ENCODE measurements at regions of chr10 and their contacts with region 1.

Region 1: DNA sequence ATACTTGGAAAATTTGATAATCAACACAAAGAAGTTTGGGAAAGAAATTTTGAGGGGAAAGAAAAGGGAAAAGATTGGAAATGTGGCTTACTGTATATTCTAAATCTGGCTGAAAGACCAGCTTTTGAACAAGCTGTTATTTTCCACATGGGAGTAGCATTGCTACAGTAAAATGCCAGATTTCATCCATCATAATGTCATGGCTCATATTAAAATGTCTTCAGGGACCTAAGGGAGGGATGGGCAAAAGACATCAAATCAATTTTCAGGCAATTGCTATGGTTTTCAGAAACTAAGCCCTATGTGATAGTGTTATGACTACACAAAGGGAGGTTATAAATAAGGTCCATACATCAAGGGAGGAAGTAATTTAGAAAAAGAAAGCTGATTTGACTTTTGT is 1116.9 kb upstream of the CELF2 start:
- DNase-seq: no peak

Region 2: DNA sequence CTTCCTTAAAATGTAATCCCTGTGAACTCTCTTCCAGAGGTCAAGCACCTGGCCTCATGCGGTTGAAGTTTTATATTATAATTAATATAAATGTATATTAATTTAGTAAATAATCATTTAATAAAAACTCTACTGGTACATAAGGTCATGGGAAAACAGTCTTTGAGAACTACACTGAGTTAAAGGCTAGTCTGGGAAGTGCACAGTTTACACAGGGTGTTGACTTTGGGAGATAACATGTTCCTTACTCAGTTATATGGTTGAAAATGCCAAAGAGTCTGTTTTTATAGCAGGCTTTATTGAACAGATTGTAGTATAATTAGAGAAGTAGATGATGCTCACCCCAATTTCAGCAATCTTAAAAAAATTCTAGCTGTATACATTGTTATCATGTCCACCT is 1110.4 kb before region 1 on chr10:
- intact Hi-C with region 1: no loop called
- DNase-seq: no peak

Region 3: DNA sequence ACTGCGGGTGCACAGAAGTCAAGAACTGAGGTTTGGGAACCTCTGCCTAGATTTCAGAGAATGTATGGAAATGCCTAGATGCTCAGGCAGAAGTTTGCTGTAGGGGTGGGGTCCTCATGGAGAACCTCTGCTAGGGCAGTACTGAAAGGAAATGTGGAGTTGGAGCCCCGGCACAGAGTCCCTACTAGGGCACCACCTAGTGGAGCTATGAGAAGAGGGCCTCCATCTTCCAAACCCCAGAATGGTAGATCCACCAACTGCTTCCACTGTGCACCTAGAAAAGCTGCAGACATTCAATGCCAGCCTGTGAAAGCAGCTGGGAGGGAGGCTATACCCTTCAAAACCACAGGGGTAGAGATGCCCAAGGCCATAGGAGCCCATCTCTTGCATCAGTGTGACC is 219.1 kb before region 1 on chr10:
- intact Hi-C with region 1: no loop called
- DNase-seq: no peak

Region 4: GRCh38 chr10:9885761-9886160 is 15.0 kb before region 1 on chr10:
- intact Hi-C with region 1: loop called in 1 of 2 experiments (anchors 1 kb)
- DNase-seq: no peak

Region 5: DNA sequence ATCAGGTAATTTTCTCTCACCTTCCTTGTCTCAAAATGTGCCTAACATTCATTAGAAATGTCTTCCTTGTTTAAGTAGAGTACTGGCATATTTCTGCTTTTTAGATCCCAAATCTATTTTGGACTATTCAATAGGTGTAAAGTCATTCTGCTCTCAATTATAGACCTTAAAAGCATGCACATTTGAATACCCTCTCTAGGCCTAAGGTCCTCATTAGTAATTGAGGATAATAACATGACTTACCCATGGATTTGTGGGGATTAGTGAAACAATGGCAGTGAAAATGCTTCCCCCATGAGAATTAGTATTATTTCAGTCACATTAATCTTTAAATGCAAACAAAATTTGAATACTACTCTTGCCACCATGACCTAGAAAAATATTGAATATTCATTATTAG is 43.9 kb after region 1 on chr10:
- intact Hi-C with region 1: no loop called
- DNase-seq: no peak

Region 6: DNA sequence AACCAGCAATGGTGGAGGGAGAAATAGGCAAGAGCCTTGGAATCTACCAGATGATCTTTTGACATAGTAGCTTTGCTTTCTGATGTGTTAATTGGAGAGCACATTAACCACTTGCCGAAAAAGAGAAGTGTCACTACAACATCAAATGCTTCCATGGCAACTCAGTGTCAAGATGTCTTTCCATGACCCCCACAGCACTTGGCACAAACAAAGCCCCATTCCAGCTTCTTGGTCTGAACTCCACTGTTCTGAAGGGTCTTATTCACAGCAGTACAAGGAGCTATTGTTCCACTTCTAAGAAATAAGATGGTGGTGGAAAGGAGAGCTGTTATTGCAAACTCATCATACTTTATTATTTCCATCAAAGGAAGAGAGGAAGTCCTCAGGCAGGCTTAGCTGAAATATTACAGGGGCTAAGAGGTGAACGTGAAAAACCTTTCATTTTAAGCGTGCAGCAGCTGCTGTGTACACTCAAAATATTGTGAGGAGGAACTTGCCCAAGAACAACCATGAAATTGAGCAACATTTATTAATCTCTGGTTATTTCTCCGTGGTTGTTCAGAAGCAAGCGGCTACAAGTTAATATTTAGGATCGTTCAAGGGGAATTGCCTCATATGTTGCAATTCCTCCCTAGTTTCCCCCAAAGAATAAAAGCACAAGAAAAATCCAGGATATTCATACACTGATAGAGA is 762.1 kb after region 1 on chr10:
- intact Hi-C with region 1: loop called in 1 of 2 experiments (anchors 5 kb)
- DNase-seq: no peak